ENCODE measurements at regions of chr17 and their contacts with region 1.

Region 1: GRCh38 chr17:58112970-58113631 is 29.9 kb downstream of the DYNLL2 start:
- DNase-seq: peak; percentile 60
- ATAC-seq: peak; percentile 96
- H3K4me3 ChIP-seq: no peak overlapping the region
- H3K27ac ChIP-seq: no peak overlapping the region
- H3K4me1 ChIP-seq: no peaks in the 10 kb centered on the region
- H3K27me3 ChIP-seq: peaks cover 22% of the 10 kb centered on the region
- CTCF ChIP-seq: peak; percentile 94
- POLR2A ChIP-seq: no peak
- RAD21 ChIP-seq: peak; percentile 93

Region 2: DNA sequence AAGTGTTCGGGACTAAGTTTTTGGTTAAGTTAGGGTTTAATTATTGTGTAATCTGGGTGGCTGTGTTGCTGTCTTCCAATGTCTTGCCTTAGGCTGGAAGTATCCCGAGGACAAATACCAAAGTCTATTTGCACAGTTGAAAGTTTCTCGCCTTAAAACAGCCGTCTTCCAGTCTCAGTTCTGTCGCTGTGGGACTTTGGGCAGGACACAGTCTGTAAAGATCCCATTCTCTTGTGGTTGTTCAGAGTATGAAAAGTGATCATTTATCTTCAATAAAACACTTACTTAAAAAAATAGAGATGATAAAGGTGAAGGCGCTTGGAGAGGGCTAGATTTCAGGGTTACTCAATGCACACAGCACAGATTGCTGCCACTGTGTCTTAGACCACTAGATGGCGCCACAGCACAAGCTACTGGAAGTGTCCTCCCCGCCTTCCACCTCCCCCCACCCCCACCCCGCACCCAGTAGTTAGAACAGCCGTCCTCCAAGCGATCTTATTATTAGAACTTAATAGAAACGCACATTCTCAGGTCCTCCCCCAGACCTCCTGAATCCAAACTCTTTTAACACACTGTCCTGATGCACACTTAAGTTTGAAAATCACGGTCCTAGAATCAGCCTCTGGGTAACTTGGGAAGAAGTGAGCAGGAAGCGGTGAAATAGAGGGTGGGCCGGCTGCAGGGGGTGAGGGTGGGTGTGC is 982.2 kb before region 1 on chr17:
- CTCF ChIA-PET with region 1: no interaction called
- POLR2A ChIA-PET with region 1: interaction called, 3 read pairs
- dilution Hi-C with region 1: no loop called
- in situ Hi-C with region 1: no loop called
- intact Hi-C with region 1: loop called (anchors 1 kb)
- DNase-seq: peak; percentile 70
- ATAC-seq: peak; percentile 99
- H3K4me3 ChIP-seq: peak overlapping the region; percentile 42; the same call in 1 of the 2 replicates
- H3K27ac ChIP-seq: no peak overlapping the region
- H3K4me1 ChIP-seq: no peaks in the 10 kb centered on the region
- H3K27me3 ChIP-seq: peaks cover 7% of the 10 kb centered on the region
- CTCF ChIP-seq: peak; percentile 78
- POLR2A ChIP-seq: no peak
- RAD21 ChIP-seq: peak; percentile 89

Region 3: GRCh38 chr17:57671667-57672632 is 441.2 kb before region 1 on chr17:
- CTCF ChIA-PET with region 1: no interaction called
- POLR2A ChIA-PET with region 1: no interaction called
- dilution Hi-C with region 1: no loop called
- in situ Hi-C with region 1: no loop called
- intact Hi-C with region 1: loop called (anchors 10 kb)
- DNase-seq: peak; percentile 69
- ATAC-seq: peak; percentile 99
- H3K4me3 ChIP-seq: no peak overlapping the region
- H3K27ac ChIP-seq: no peak overlapping the region
- H3K4me1 ChIP-seq: peaks cover 12% of the 10 kb centered on the region
- H3K27me3 ChIP-seq: no peaks in the 10 kb centered on the region
- CTCF ChIP-seq: peak; percentile 89
- POLR2A ChIP-seq: 0 out of 2 replicates have a peak, but pooled peaks have one; percentile 25
- RAD21 ChIP-seq: peak; percentile 93

Region 4: GRCh38 chr17:57855391-57856035 is 257.6 kb before region 1 on chr17:
- CTCF ChIA-PET with region 1: interaction called, 3 read pairs
- POLR2A ChIA-PET with region 1: no interaction called
- dilution Hi-C with region 1: no loop called
- in situ Hi-C with region 1: loop called (anchors 5 kb)
- intact Hi-C with region 1: loop called (anchors 2 kb)
- DNase-seq: no peak
- ATAC-seq: no peak
- H3K4me3 ChIP-seq: no peak overlapping the region
- H3K27ac ChIP-seq: no peak overlapping the region
- H3K4me1 ChIP-seq: peaks cover 7% of the 10 kb centered on the region
- H3K27me3 ChIP-seq: no peaks in the 10 kb centered on the region
- CTCF ChIP-seq: no peak
- POLR2A ChIP-seq: no peak
- RAD21 ChIP-seq: no peak

Region 5: DNA sequence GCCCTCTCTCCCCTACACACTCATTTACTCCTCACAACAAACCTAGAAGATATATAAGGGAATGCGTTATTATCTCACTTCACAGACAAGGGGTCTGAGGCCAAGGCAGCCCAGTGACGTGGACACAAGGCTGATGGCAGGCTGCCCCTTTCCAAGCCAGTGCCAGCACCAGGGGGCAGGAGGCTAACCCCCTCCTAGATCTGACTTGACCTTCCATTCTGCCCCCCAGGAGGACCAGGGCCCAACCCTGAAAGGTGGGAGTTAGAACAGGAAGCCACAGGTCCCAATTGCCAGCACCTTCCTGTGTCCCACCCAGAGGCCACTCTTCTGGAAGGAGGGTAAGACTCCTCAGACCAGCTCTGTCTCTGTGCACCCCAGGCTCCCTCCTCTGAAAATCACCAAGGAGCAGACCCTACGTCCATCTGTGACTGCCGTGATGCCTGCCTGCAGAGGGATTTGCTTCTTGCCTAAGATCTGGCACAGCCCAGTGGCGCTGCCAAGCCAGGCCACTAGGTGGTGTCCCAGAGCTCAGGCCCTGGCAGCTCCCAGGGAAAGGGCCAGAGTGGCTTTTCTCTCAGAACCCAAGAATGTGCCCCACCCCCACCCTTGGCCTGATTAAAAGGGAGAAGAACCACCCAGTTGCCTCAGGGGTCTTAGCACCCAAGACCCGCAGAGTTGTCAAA is 220.8 kb before region 1 on chr17:
- CTCF ChIA-PET with region 1: no interaction called
- POLR2A ChIA-PET with region 1: no interaction called
- dilution Hi-C with region 1: no loop called
- in situ Hi-C with region 1: no loop called
- intact Hi-C with region 1: no loop called
- DNase-seq: peak; percentile 84
- ATAC-seq: peak; percentile 74
- H3K4me3 ChIP-seq: no peak overlapping the region
- H3K27ac ChIP-seq: peak overlapping the region; percentile 67
- H3K4me1 ChIP-seq: peaks cover 44% of the 10 kb centered on the region
- H3K27me3 ChIP-seq: no peaks in the 10 kb centered on the region
- CTCF ChIP-seq: peak; percentile 97
- POLR2A ChIP-seq: no peak
- RAD21 ChIP-seq: peak; percentile 88

Region 6: DNA sequence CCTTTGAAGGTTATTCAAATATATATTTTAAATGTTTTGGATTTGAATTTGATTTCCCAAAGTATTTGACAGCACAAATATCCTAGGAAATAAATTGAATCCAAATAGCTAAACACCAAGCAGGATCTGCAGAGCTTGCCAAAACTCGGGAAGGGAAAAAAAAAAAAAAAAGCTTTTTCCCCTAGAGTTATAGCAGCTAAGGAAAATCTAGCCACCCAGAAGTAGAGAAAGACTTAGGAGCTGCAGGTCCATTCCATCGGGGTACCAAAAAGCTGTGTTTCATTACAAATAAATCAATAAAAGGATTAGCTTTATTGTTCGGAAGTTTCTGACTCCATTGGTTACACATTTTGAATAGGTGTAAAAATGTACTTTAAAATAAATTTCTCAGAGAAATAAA is 355.8 kb after region 1 on chr17:
- CTCF ChIA-PET with region 1: no interaction called
- POLR2A ChIA-PET with region 1: interaction called, 10 read pairs
- dilution Hi-C with region 1: no loop called
- in situ Hi-C with region 1: no loop called
- intact Hi-C with region 1: no loop called
- DNase-seq: no peak
- ATAC-seq: no peak
- H3K4me3 ChIP-seq: no peak overlapping the region
- H3K27ac ChIP-seq: no peak overlapping the region
- H3K4me1 ChIP-seq: no peaks in the 10 kb centered on the region
- H3K27me3 ChIP-seq: no peaks in the 10 kb centered on the region; the same call in none of the 2 replicates
- CTCF ChIP-seq: no peak
- POLR2A ChIP-seq: no peak
- RAD21 ChIP-seq: no peak

Measured in IMR-90 (cell line).